HCT116 (cell line): ENCODE measurements at regions of chr2 and their contacts with region 1.

Region 1: DNA sequence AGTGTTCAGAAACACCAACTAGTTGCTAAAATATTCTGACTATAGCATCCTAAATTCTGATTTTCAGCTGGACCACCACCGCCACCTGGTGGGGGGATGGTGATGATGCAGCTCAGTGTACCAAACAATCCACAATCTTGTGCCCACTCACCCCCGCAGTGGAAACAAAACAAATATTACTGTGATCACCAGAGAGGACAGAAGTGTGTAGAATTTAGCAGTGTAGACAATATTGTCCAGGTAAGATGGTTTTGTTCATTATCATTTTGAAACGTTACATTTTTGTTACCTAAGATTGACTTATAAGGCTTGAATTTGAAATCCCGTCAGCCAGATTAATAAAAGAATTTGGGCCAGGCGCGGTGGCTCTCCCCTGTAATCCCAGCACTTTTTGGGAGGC is 31.7 kb upstream of the UBXN4 start:
- DNase-seq: peak; percentile 8
- ATAC-seq: peak; percentile 72
- H3K4me3 ChIP-seq: no peak overlapping the region
- H3K27ac ChIP-seq: no peak overlapping the region
- H3K4me1 ChIP-seq: no peaks in the 10 kb centered on the region
- H3K27me3 ChIP-seq: no peaks in the 10 kb centered on the region
- CTCF ChIP-seq: peak; percentile 79 to 97 (median 92)
- POLR2A ChIP-seq: no peak
- RAD21 ChIP-seq: peak; percentile 86

Region 2: GRCh38 chr2:134988994-134989605 is 720.9 kb before region 1 on chr2:
- CTCF ChIA-PET with region 1: interaction called, 33 read pairs
- POLR2A ChIA-PET with region 1: no interaction called
- RAD21 ChIA-PET with region 1: interaction called in 1 of 2 experiments, 3 read pairs
- intact Hi-C with region 1: loop called (anchors 1 kb)
- DNase-seq: peak; percentile 18
- ATAC-seq: peak; percentile 85
- H3K4me3 ChIP-seq: no peak overlapping the region
- H3K27ac ChIP-seq: no peak overlapping the region
- H3K4me1 ChIP-seq: no peaks in the 10 kb centered on the region
- H3K27me3 ChIP-seq: peaks cover 21% of the 10 kb centered on the region; the same call in 1 of the 2 replicates
- CTCF ChIP-seq: peak; percentile 31 to 65 (median 45); a peak in 4 of 6 replicates
- POLR2A ChIP-seq: no peak
- RAD21 ChIP-seq: peak; percentile 71

Region 3: GRCh38 chr2:135424839-135425238 is 285.2 kb before region 1 on chr2:
- CTCF ChIA-PET with region 1: interaction called, 7 read pairs
- POLR2A ChIA-PET with region 1: no interaction called
- RAD21 ChIA-PET with region 1: no interaction called
- intact Hi-C with region 1: loop called (anchors 2 kb)
- DNase-seq: peak; percentile 4
- ATAC-seq: no peak
- H3K4me3 ChIP-seq: no peak overlapping the region
- H3K27ac ChIP-seq: no peak overlapping the region
- H3K4me1 ChIP-seq: no peaks in the 10 kb centered on the region
- H3K27me3 ChIP-seq: no peaks in the 10 kb centered on the region
- CTCF ChIP-seq: peak; percentile 13 to 44 (median 22); a peak in 3 of 6 replicates
- POLR2A ChIP-seq: no peak
- RAD21 ChIP-seq: peak; percentile 17; the same call in 1 of the 2 replicates

Region 4: DNA sequence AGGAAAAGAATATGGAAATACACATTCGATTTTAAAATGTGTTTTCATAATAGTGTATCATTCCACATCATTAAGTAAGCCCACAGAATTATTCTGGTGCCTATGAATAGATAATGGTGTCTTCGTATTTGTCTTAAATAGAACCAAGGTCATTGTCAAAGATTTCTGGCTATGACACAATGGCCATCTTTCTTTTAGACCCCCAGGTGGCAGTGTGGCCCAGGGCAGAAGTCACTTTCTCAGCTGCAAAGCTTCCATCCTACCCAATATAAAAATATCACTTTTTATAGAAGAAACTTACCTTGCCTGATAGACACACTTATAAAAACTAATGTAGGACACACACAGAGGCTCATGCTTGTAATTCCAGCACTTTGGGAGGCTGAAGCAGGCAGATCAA is 236.4 kb before region 1 on chr2:
- CTCF ChIA-PET with region 1: interaction called, 50 read pairs
- POLR2A ChIA-PET with region 1: interaction called, 3 read pairs
- RAD21 ChIA-PET with region 1: interaction called, 5 to 6 read pairs
- intact Hi-C with region 1: loop called (anchors 1 kb)
- DNase-seq: no peak
- ATAC-seq: peak; percentile 67
- H3K4me3 ChIP-seq: no peak overlapping the region
- H3K27ac ChIP-seq: no peak overlapping the region
- H3K4me1 ChIP-seq: no peaks in the 10 kb centered on the region
- H3K27me3 ChIP-seq: no peaks in the 10 kb centered on the region
- CTCF ChIP-seq: peak; percentile 47 to 76 (median 74); a peak in 5 of 6 replicates
- POLR2A ChIP-seq: no peak
- RAD21 ChIP-seq: peak; percentile 83

Region 5: GRCh38 chr2:135615404-135615803 is 94.6 kb before region 1 on chr2:
- CTCF ChIA-PET with region 1: no interaction called
- POLR2A ChIA-PET with region 1: no interaction called
- RAD21 ChIA-PET with region 1: no interaction called
- intact Hi-C with region 1: no loop called
- DNase-seq: no peak
- ATAC-seq: no peak
- H3K4me3 ChIP-seq: no peak overlapping the region
- H3K27ac ChIP-seq: no peak overlapping the region
- H3K4me1 ChIP-seq: no peaks in the 10 kb centered on the region
- H3K27me3 ChIP-seq: no peaks in the 10 kb centered on the region
- CTCF ChIP-seq: no peak
- POLR2A ChIP-seq: no peak
- RAD21 ChIP-seq: no peak